ENCODE measurements at regions of chr16 and their contacts with region 1.

Region 1: DNA sequence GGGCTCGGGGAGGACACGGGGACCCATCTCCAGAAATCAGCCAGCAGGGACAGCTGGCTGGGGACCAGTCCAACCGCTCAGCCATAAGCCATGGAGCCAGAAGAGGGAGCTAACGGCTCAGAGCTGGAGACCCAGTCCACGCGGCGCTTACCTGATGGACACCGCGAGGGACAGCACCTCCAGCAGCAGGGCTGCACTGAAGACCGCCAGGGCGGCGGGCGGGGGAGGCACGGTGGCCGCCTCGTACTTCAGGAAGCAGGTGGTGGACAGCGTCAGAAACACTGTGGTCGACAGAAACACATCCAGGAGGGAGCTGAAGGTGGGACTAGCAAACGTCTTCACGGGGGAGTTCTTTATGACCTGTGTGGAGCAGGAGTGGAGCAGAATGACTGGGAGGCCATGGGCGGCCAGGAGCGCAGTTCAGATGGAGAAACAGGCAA is 102.6 kb upstream of the CREBBP start:
- DNase-seq: peak; percentile 81 to 93
- ATAC-seq: peak; percentile 96 to 98
- H3K4me3 ChIP-seq: no peak overlapping the region
- H3K27ac ChIP-seq: peak overlapping the region; percentile 46 to 75; a peak in 4 of 6 replicates
- H3K4me1 ChIP-seq: peaks cover 11% of the 10 kb centered on the region; the same call in 2 of the 3 replicates
- CTCF ChIP-seq: peak; percentile 91
- EP300 ChIP-seq: no peak
- POLR2A ChIP-seq: no peak
- RAD21 ChIP-seq: peak; percentile 96 to 97

Region 2: DNA sequence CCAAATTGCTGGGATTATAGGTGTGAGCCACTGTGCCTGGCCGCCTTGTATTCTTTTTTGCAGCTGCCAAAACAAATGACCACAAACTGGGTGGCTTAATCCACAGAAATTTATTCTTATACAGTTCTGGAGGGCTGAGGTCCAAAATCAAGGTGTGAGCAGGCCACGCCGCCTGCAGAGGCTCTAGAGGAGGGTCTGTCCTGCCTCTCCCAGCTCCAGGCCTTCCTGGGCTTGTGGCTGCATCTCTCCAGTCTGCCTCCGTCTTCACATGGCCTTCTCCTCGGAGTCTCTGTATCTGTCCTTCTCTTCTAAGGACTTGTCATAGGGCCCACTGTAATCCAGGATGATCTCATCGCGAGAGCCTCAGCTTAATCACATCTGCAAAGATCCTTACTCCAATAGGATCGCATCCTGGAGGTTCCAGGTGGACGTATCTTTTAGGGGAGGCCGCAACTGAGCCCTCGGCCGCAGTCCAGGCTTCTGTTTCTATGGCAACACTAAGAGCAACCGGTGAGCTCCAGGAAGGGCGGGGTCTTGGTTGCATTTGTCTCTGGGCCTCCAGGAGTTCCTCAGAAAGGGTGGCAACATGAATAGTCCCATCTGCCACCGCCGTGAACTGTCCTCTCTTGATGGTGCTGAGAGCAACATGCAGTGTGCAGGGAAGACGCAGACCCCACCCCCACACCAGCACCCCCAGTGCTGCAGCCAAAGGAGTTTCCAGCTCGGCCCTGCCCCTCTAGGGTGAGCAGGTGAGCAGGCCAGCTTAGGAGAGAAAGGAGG is 73.1 kb before region 1 on chr16:
- CTCF ChIA-PET with region 1: no interaction called
- POLR2A ChIA-PET with region 1: no interaction called
- DNase-seq: no peak
- ATAC-seq: no peak
- H3K4me3 ChIP-seq: no peak overlapping the region
- H3K27ac ChIP-seq: no peak overlapping the region
- H3K4me1 ChIP-seq: no peaks in the 10 kb centered on the region
- CTCF ChIP-seq: no peak
- EP300 ChIP-seq: no peak
- POLR2A ChIP-seq: no peak
- RAD21 ChIP-seq: no peak

Region 3: DNA sequence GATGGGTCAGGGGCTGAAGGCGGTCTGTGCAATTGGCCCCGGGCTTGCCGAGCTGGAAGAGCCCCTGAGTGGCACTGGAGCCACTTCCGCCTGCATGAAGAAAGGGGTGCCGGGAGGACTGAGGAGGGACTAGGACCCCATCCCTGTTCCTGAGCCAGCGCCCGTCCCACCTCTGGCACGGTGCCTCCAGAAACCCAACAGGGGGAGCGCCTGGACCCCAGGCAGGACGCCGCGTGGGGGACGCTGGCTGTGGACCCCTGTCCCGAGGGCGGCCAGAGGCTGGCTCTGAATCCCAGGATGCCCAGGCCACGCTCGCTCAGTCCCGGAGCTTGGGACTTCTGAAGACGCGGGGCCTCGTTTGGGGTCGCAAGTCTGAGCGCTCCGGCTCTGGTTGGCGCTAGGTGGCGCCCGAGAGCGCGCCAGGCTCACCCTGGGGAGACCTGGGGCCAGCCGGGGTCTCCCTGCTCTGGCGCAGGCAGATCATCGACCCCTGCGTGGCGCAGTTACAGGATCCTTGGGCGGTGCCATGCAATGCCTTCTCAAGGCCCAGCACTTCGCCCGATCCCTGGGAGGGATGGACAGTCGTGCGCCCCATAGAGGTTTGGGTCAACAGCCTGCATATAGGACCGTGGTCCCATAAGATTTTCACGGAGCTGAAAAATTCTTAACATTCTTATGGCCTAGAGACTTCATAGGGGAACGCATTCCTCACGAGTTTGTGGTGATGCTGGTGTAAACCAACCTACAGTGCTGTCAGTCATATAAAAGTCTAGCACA is 44.1 kb before region 1 on chr16:
- CTCF ChIA-PET with region 1: interaction called, 16 read pairs
- POLR2A ChIA-PET with region 1: no interaction called
- DNase-seq: peak; percentile 56 to 86
- ATAC-seq: peak; percentile 93 to 95
- H3K4me3 ChIP-seq: peak overlapping the region; percentile 46
- H3K27ac ChIP-seq: peak overlapping the region; percentile 54 to 83; a peak in 5 of 6 replicates
- H3K4me1 ChIP-seq: peaks cover 10% of the 10 kb centered on the region
- CTCF ChIP-seq: peak; percentile 93
- EP300 ChIP-seq: no peak
- POLR2A ChIP-seq: no peak; the same call in 1 of the 2 replicates
- RAD21 ChIP-seq: peak; percentile 62 to 72

Region 4: GRCh38 chr16:3971261-3971660 is 11.8 kb before region 1 on chr16:
- CTCF ChIA-PET with region 1: interaction called, 64 read pairs
- POLR2A ChIA-PET with region 1: no interaction called
- DNase-seq: peak in 1 of 2 experiments; percentile 32
- ATAC-seq: no peak; a peak in 1 of 6 replicates
- H3K4me3 ChIP-seq: no peak overlapping the region
- H3K27ac ChIP-seq: no peak overlapping the region
- H3K4me1 ChIP-seq: peaks cover 4% of the 10 kb centered on the region; the same call in 2 of the 3 replicates
- CTCF ChIP-seq: no peak
- EP300 ChIP-seq: no peak
- POLR2A ChIP-seq: no peak
- RAD21 ChIP-seq: no peak

Region 5: GRCh38 chr16:4006397-4006999 is 23.4 kb after region 1 on chr16:
- CTCF ChIA-PET with region 1: interaction called, 17 read pairs
- POLR2A ChIA-PET with region 1: no interaction called
- DNase-seq: no peak
- ATAC-seq: no peak
- H3K4me3 ChIP-seq: no peak overlapping the region
- H3K27ac ChIP-seq: no peak overlapping the region
- H3K4me1 ChIP-seq: no peaks in the 10 kb centered on the region
- CTCF ChIP-seq: no peak
- EP300 ChIP-seq: no peak
- POLR2A ChIP-seq: no peak
- RAD21 ChIP-seq: no peak

Region 6: DNA sequence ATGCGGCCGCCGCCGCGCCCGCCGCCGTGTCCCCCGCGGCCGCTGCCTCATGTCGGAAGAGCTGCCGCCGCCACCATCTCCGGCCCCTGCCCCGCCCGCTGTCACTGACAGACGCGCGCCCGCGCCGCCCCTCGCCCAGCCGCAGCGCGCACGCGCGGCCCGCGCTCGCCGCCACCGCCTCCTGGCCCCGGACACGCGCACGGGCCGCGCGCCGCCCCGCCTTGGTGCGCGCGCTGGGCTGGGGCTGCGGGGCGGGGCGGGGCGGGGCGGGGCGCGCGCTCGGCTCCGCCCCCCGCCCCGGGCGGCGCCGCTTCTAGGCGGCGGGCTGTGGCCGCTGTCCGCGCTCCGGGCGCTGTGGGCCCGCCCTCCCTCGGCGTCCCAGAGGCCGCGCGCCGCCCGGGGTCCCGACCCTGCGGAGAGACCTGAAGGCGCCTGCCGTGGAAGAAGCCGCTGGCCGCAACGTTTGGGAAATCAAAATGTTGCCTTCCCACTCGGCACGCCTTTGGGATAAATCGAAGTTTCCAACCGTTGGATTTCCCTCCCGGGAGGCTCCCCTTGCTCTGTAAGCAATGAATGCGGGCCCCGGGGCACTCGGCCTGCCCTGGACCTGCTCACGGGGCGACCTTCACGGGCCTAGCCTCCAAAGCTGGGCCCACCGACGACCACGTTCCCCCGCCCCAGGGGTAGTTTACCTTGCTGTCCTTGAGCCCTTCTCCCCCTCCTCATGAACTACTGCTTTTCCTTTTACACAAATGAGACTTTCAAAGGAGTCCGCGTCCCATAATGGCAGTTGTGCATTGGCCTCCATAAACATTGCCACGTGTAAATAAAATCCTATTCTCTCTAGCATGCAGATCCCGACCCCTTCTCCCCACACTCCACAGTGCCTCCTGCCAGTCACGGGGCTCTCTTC is 133.5 kb after region 1 on chr16 and contains the start of gene ADCY9:
- CTCF ChIA-PET with region 1: interaction called, 10 read pairs
- POLR2A ChIA-PET with region 1: no interaction called
- DNase-seq: peak; percentile 69 to 86
- ATAC-seq: peak; percentile 78 to 79
- H3K4me3 ChIP-seq: peak within 1 kb of the TSS; percentile 92
- H3K27ac ChIP-seq: peak within 1 kb of the TSS; percentile 82 to 95
- H3K4me1 ChIP-seq: peaks cover 36% of the 10 kb centered on the region
- CTCF ChIP-seq: no peak
- EP300 ChIP-seq: no peak
- POLR2A ChIP-seq: peak; percentile 73
- RAD21 ChIP-seq: no peak
- polyA plus RNA-seq, gene ADCY9: 6.2 and 6.9 TPM in 2 replicates

Region 7: GRCh38 chr16:4200000-4200780 is 217.1 kb after region 1 on chr16:
- CTCF ChIA-PET with region 1: interaction called, 24 read pairs
- POLR2A ChIA-PET with region 1: no interaction called
- DNase-seq: peak; percentile 72 to 74
- ATAC-seq: peak; percentile 96
- H3K4me3 ChIP-seq: no peak overlapping the region
- H3K27ac ChIP-seq: peak overlapping the region in 1 of 2 experiments; percentile 65; a peak in 3 of 6 replicates
- H3K4me1 ChIP-seq: peaks cover 7% of the 10 kb centered on the region; the same call in 2 of the 3 replicates
- CTCF ChIP-seq: peak; percentile 66
- EP300 ChIP-seq: no peak
- POLR2A ChIP-seq: no peak
- RAD21 ChIP-seq: peak; percentile 86 to 89

Region 8: DNA sequence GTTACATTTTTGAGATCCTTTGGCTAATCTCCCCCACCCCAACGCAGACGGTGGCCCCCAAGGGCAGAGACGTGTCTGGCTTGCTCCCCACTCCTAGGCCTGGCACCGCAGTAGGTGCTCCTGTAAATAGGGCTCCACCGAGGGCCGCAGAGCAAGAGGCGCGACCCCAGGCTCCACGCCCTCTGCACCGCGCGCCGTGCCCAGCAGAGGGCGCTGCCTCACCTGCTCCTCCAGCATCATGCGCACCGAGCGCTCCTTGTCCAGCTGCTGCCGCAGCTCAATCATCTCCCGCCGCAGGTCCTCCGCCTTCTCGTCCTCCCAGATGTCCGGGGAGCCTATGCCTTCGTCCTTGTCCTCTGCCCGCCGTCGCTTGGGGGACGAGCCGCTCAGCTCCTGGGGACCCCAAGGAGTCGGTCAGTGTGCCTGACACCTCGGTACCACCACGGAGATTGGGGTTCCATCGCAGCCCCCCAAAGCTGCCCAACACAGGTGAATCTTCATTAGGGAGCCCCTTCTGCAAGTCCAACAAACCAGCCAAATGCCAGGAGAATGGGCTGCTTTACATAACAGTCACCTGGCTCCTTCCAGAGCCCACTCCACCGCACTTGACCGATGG is 278.6 kb after region 1 on chr16:
- CTCF ChIA-PET with region 1: interaction called, 15 read pairs
- POLR2A ChIA-PET with region 1: no interaction called
- DNase-seq: peak; percentile 54 to 78
- ATAC-seq: peak; percentile 55 to 81; a peak in 5 of 6 replicates
- H3K4me3 ChIP-seq: no peak overlapping the region
- H3K27ac ChIP-seq: no peak overlapping the region
- H3K4me1 ChIP-seq: peaks cover 9% of the 10 kb centered on the region; the same call in 1 of the 3 replicates
- CTCF ChIP-seq: peak; percentile 69
- EP300 ChIP-seq: no peak
- POLR2A ChIP-seq: no peak
- RAD21 ChIP-seq: peak; percentile 64 to 67

Measured in A549 (cell line).